ENCODE measurements at regions of chr6 and their contacts with region 1.

Region 1: GRCh38 chr6:137641474-137642077 is 147.4 kb upstream of the OLIG3 start:
- DNase-seq: peak; percentile 69
- ATAC-seq: peak; percentile 92
- H3K4me3 ChIP-seq: no peak overlapping the region
- H3K27ac ChIP-seq: no peak overlapping the region
- H3K4me1 ChIP-seq: no peaks in the 10 kb centered on the region
- H3K27me3 ChIP-seq: peaks cover 14% of the 10 kb centered on the region
- CTCF ChIP-seq: peak; percentile 79
- POLR2A ChIP-seq: no peak
- RAD21 ChIP-seq: peak; percentile 87

Region 2: GRCh38 chr6:136801581-136801980 is 840.0 kb before region 1 on chr6:
- CTCF ChIA-PET with region 1: no interaction called
- POLR2A ChIA-PET with region 1: interaction called, 21 read pairs
- dilution Hi-C with region 1: no loop called
- in situ Hi-C with region 1: no loop called
- intact Hi-C with region 1: no loop called
- DNase-seq: no peak
- ATAC-seq: no peak
- H3K4me3 ChIP-seq: no peak overlapping the region
- H3K27ac ChIP-seq: no peak overlapping the region
- H3K4me1 ChIP-seq: no peaks in the 10 kb centered on the region
- H3K27me3 ChIP-seq: no peaks in the 10 kb centered on the region
- CTCF ChIP-seq: no peak
- POLR2A ChIP-seq: no peak
- RAD21 ChIP-seq: no peak

Region 3: GRCh38 chr6:136967876-136968752 is 673.5 kb before region 1 on chr6:
- CTCF ChIA-PET with region 1: no interaction called
- POLR2A ChIA-PET with region 1: no interaction called
- dilution Hi-C with region 1: no loop called
- in situ Hi-C with region 1: no loop called
- intact Hi-C with region 1: loop called (anchors 2 kb)
- DNase-seq: peak; percentile 58
- ATAC-seq: peak; percentile 85
- H3K4me3 ChIP-seq: no peak overlapping the region
- H3K27ac ChIP-seq: no peak overlapping the region
- H3K4me1 ChIP-seq: no peaks in the 10 kb centered on the region
- H3K27me3 ChIP-seq: peaks cover 9% of the 10 kb centered on the region
- CTCF ChIP-seq: peak; percentile 59
- POLR2A ChIP-seq: no peak
- RAD21 ChIP-seq: peak; percentile 47; the same call in 1 of the 2 replicates

Region 4: GRCh38 chr6:137094411-137095008 is 547.1 kb before region 1 on chr6:
- CTCF ChIA-PET with region 1: interaction called, 4 read pairs
- POLR2A ChIA-PET with region 1: no interaction called
- dilution Hi-C with region 1: no loop called
- in situ Hi-C with region 1: loop called (anchors 5 kb)
- intact Hi-C with region 1: loop called (anchors 1 kb)
- DNase-seq: peak; percentile 67
- ATAC-seq: peak; percentile 82
- H3K4me3 ChIP-seq: no peak overlapping the region
- H3K27ac ChIP-seq: no peak overlapping the region
- H3K4me1 ChIP-seq: no peaks in the 10 kb centered on the region
- H3K27me3 ChIP-seq: peaks cover 14% of the 10 kb centered on the region
- CTCF ChIP-seq: peak; percentile 78
- POLR2A ChIP-seq: no peak
- RAD21 ChIP-seq: peak; percentile 78

Region 5: DNA sequence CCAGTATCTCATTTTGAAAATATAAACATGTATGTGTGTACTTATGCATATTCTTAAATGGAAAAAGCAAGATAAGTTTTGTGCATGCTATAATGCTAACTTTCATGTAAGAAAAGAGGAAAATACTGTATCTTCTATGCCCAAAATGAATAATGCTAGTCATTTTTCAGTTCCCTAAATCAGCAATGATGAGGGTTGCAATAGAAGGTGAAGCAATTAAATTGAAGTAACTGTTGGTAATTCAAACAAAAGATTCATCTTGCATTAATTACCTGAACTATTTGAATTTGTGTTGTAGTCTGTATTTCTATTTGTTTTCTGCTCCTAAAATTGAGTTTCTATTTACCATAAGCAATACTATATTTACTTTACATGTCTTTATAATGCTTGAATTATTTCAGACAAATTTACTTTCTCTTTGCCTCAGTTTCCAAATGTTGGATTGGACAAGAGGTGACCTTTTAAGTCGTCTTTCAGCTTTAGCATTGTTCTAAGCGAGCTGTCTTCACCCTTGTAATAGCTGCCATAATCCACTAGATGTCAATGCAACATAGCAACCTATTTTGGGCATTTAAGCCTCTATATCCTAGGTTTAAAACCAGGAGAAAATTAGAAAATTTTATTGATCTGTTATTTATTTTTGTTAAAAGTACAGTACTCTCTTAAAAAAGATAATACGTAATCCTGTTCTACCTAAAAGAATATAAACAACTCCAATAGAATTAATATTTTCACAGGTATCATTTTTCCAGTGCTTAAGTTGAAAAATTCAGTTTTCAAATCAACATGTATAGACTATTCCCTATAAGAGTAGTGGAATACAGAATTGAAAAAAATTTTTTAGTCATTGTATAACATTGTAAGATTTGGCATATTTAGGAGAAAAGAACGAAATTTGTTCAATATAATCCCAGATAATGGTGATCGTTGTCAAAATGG is 370.1 kb before region 1 on chr6:
- CTCF ChIA-PET with region 1: no interaction called
- POLR2A ChIA-PET with region 1: no interaction called
- dilution Hi-C with region 1: no loop called
- in situ Hi-C with region 1: loop called (anchors 5 kb)
- intact Hi-C with region 1: loop called (anchors 1 kb)
- DNase-seq: peak; percentile 63
- ATAC-seq: peak; percentile 89
- H3K4me3 ChIP-seq: no peak overlapping the region
- H3K27ac ChIP-seq: no peak overlapping the region
- H3K4me1 ChIP-seq: no peaks in the 10 kb centered on the region
- H3K27me3 ChIP-seq: peaks cover 9% of the 10 kb centered on the region
- CTCF ChIP-seq: peak; percentile 91
- POLR2A ChIP-seq: no peak
- RAD21 ChIP-seq: peak; percentile 90

Region 6: DNA sequence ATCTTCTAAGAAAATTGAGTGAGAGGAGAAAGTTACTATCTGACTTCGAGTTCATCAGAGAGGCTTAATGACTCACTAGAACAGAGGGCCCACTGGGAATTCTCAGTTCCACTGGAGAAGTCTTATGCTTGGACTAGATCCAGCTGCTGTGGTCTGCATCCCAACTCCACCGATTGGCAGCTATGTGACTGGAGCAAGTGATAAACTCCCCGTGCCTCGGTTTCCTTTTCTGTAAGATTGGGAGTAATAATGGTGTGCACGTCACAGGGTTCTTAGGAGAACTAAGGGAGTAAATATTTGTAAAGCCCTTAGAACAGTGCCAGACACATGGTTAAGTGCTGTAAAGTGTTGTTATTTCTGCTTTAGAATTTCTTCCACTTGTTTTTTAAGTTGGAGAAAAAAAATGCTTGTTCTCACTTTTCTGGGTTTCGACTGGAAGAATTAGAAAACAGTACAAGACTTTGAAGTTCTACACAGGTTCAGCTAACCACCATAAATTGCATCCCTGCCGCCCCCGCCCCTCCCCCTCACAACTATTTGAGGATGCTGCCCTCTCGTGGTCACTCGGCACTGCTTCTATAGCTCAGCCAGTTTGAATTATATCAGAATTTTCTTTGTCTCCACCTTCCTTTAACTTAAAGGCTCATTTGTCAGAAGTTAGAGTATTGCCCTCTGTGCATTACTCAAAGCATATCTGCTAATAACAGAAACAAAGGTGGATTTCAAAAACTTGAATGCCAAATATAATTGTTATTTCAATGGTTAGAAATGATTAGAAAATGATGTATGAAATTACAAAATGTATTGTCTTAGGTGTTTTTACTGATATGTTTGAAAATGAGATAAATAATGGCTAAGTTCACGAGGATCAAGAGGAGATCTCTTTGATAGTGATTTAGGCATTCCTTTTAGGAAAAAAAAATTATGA is 327.4 kb before region 1 on chr6:
- CTCF ChIA-PET with region 1: interaction called, 4 read pairs
- POLR2A ChIA-PET with region 1: no interaction called
- dilution Hi-C with region 1: no loop called
- in situ Hi-C with region 1: no loop called
- intact Hi-C with region 1: loop called (anchors 1 kb)
- DNase-seq: peak; percentile 64
- ATAC-seq: peak; percentile 90
- H3K4me3 ChIP-seq: no peak overlapping the region
- H3K27ac ChIP-seq: no peak overlapping the region
- H3K4me1 ChIP-seq: no peaks in the 10 kb centered on the region
- H3K27me3 ChIP-seq: peaks cover 6% of the 10 kb centered on the region
- CTCF ChIP-seq: peak; percentile 90
- POLR2A ChIP-seq: no peak
- RAD21 ChIP-seq: peak; percentile 77